Activated CD4-positive, alpha-beta memory T cell treated with anti-CD3 and anti-CD28 coated beads, Interleukin-2, amount 10 ng/mL, durations not matched to agents 7 days and 5 days (primary cell): ENCODE measurements at regions of chr12 and their contacts with region 1.

Region 1: DNA sequence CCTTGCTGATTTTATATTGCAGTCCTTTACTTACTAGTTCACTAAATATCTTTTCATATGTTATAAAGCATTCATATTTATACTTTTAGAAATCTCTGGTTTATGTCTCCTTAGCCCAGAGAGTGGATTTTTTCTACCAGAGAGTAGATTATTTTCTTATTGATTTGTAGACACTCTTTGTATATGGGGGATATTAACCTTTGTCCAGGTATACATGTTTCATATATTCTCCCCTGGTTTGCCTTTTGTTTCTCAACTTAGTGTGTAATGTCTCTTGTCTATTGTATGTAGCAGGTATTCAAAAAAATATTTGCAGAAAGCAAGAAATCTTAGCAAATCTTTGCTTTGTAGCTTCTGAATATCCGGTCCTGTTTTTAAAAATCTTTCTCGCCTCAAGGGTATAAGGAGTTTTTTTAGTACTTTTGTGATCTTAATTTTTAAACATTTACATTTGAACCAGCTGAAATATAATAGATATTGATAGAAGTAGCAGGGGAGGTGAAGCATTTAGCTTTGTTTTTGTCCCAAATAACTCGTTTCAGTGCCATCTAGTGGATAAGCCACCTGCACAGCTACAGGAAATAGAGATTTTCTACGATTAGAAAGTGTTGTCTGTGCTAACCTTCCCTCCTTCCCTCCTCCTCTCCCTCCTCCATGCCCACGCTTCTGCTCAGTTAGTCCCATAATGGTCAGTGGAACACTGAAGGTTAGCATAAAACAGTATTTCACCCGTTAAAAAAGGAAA is 97.0 kb downstream of the PHETA1 start:
- DNase-seq: no peak
- H3K4me3 Mint-ChIP-seq: no peak overlapping the region
- H3K27ac Mint-ChIP-seq: no peak overlapping the region
- H3K4me1 Mint-ChIP-seq: peaks cover 8% of the 10 kb centered on the region
- H3K27me3 Mint-ChIP-seq: peaks cover 13% of the 10 kb centered on the region

Region 2: GRCh38 chr12:111298582-111299436 is 27.0 kb after region 1 on chr12:
- CTCF ChIA-PET with region 1: interaction called, 12 read pairs
- POLR2A ChIA-PET with region 1: no interaction called
- DNase-seq: peak; percentile 42
- H3K4me3 Mint-ChIP-seq: no peak overlapping the region
- H3K27ac Mint-ChIP-seq: no peak overlapping the region
- H3K4me1 Mint-ChIP-seq: no peaks in the 10 kb centered on the region
- H3K27me3 Mint-ChIP-seq: no peaks in the 10 kb centered on the region